ENCODE measurements at regions of chr2 and their contacts with region 1.

Region 1: DNA sequence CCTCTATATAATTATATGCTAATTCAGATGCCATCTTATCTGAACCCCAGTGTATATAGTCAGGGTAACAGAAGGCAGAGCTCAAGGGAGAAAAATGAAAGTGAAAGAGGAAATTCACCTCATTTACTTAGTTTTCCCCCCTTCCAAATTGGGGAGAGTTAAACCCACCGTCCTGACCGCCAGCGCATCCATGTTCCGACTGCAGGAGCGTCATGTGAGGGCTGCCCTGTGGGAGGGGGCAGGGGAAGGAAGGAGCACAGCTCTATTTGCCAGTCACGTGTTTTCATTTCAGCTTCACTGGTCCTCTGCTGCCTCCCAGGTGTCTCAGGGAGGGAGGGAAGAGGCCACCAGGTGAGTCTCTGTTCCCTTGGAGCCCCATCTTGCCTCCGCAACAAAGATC is 13.2 kb downstream of the CNNM4 start:
- DNase-seq: peak; percentile 67
- ATAC-seq: peak; percentile 67
- H3K4me3 Mint-ChIP-seq: peak overlapping the region; percentile 59
- H3K27ac Mint-ChIP-seq: peak overlapping the region; percentile 70
- H3K4me1 Mint-ChIP-seq: peaks cover 22% of the 10 kb centered on the region
- H3K27me3 Mint-ChIP-seq: no peaks in the 10 kb centered on the region

Region 2: DNA sequence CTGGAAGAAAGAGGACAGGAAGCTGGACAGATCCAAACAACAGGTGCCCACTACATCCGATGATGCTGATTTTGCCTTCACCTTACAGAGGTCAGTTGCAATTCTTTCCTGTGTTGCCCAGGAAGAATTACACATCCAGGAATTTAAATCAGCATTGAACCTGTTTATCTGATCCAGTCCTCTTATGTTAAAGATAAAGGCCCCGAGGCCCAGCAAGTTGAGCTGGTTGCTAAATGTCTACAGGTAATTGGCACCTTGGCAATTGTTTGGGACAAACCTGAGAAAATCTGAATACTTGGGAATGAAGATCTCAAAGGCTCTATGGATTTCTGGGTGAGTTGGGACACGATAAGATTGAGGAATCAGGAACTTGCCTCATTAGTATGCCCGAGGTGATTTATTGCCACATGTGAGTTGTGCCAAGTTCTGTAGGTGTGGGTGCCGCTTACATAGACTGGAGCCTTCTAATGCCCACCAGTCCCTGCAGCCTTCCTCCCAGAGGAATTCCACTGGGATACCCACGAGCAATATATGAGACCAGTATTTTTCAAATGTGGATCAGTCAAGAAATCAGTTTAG is 20.1 kb before region 1 on chr2:
- CTCF ChIA-PET with region 1: no interaction called
- POLR2A ChIA-PET with region 1: no interaction called
- intact Hi-C with region 1: no loop called
- DNase-seq: no peak
- ATAC-seq: no peak
- H3K4me3 Mint-ChIP-seq: no peak overlapping the region
- H3K27ac Mint-ChIP-seq: no peak overlapping the region
- H3K4me1 Mint-ChIP-seq: no peaks in the 10 kb centered on the region
- H3K27me3 Mint-ChIP-seq: no peaks in the 10 kb centered on the region

Region 3: GRCh38 chr2:96795076-96795475 is 21.2 kb after region 1 on chr2:
- CTCF ChIA-PET with region 1: interaction called, 4 read pairs
- POLR2A ChIA-PET with region 1: no interaction called
- intact Hi-C with region 1: loop called in 1 of 2 experiments (anchors 2 kb)
- DNase-seq: no peak
- ATAC-seq: no peak
- H3K4me3 Mint-ChIP-seq: no peak overlapping the region
- H3K27ac Mint-ChIP-seq: no peak overlapping the region
- H3K4me1 Mint-ChIP-seq: no peaks in the 10 kb centered on the region
- H3K27me3 Mint-ChIP-seq: no peaks in the 10 kb centered on the region

Region 4: DNA sequence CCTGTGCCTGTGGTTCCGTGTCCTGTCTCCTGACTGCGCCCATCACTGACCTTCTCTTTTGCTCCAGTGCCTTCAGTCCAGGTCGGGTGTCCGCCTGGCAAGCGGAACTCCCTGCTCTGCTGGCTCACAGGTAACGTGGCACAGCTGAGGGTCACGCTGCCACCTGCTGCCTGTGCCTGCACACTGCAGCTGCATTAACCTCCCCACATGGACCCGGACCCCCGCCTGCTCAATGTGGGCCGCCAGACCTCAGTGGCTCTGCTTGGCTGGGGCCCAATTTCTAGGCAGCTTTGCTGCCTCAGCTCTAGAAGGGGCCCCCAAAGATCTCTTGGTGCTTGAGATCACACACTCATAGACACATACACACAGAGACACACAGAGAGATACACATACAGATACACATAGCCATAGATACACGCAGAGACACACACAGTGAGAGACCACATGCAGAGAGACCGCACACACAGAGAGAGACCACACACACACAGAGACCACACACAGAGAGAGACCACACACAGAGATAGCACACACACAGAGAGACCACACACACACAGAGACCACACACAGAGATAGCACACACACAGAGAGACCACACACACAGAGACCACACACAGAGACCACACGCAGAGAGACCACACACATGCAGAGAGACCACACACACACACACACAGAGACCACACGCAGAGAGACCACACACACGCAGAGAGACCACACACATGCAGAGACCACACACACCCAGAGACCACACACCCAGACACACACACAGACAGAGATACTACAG is 27.3 kb after region 1 on chr2:
- CTCF ChIA-PET with region 1: interaction called, 5 read pairs
- POLR2A ChIA-PET with region 1: no interaction called
- intact Hi-C with region 1: loop called in 1 of 2 experiments (anchors 2 kb)
- DNase-seq: peak; percentile 87
- ATAC-seq: peak; percentile 92
- H3K4me3 Mint-ChIP-seq: no peak overlapping the region
- H3K27ac Mint-ChIP-seq: no peak overlapping the region
- H3K4me1 Mint-ChIP-seq: peaks cover 2% of the 10 kb centered on the region
- H3K27me3 Mint-ChIP-seq: no peaks in the 10 kb centered on the region

Region 5: DNA sequence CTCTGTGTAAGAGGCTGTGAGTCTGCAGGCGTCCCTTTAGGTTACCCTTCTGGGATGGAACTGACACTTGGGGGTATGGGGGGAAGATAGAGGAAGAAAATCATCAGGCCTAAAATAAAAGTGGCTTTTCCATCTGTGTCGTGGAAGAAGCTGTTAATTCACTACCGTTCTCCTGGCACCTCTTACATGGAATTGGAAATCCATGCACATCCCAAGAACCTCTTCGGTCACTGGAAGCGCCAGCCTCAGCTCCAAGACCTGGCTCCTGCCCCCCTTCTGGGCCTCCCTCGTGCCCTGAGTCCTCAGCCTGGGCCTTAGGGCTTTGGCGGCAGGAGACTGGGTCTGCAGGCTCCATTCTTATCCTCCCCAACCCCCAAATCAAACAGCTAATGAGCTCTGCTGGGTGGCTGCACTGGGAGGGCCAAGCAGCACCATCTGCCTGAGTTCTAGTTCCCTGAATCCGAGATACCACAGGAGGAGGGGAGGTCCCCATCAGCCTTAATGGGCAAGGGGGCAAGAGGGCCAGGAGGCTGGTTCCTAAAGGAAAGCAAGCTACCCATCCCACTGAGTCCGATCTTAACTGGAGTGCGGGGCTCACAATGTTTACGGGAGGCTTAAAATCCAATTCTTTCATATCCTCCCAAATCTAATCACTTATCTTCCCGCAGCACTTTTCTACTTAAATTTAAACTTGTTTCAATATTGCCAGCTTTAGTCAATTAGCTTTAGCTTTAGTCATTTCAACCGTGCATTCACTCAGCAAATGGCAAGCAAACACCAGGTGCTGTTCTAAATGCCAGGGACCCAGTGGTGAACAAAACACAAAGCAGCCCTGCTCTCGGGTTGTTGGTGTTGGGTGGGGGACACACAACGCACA is 159.6 kb after region 1 on chr2:
- CTCF ChIA-PET with region 1: no interaction called
- POLR2A ChIA-PET with region 1: no interaction called
- intact Hi-C with region 1: no loop called
- DNase-seq: no peak
- ATAC-seq: no peak
- H3K4me3 Mint-ChIP-seq: no peak overlapping the region
- H3K27ac Mint-ChIP-seq: no peak overlapping the region
- H3K4me1 Mint-ChIP-seq: no peaks in the 10 kb centered on the region
- H3K27me3 Mint-ChIP-seq: no peaks in the 10 kb centered on the region